ENCODE measurements at regions of chr16 and their contacts with region 1.

Region 1: DNA sequence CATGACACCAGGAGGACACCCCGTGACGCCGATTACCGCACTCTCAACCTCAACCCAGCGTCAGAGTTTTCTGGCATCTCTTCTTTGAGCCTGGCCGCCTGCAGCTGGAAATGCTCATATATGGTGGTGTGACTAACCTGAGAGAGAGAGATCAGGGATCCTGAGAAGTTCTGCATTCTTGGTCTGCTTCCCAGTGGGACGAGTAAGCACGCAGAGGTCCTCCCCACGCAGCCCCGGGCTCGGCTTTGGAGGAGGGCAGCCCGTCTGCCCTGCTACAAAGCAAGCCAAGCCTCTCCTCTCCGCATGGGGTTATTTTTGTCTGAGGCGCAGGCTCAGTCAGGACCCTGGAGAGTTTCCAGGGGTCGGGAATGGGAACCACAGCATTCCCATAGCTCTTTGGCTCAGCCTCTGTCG is 16.5 kb downstream of the CRISPLD2 start:
- DNase-seq: peak; percentile 93 to 94
- ATAC-seq: peak; percentile 79
- H3K4me3 ChIP-seq: no peak overlapping the region
- H3K27ac ChIP-seq: no peak overlapping the region
- H3K4me1 ChIP-seq: no peaks in the 10 kb centered on the region
- H3K27me3 ChIP-seq: no peaks in the 10 kb centered on the region

Region 2: DNA sequence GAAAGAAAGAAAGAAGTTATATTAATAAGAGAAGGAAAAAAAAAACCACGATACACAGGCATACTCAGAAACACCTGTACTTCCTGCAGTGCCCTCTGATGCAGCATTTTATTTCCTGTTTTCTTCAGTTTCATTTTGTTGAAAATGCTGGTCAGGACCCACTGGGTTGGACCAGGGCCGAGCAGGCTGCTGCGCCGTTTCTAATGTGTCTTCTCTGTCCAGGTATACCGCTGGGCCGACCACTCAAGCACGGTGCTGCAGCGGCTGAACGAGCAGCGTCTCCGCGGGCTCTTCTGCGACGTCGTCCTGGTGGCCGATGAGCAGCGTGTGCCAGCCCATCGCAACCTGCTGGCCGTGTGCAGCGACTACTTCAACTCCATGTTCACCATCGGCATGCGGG is 179.6 kb before region 1 on chr16:
- intact Hi-C with region 1: no loop called
- DNase-seq: no peak
- ATAC-seq: no peak
- H3K4me3 ChIP-seq: no peak overlapping the region
- H3K27ac ChIP-seq: no peak overlapping the region
- H3K4me1 ChIP-seq: no peaks in the 10 kb centered on the region
- H3K27me3 ChIP-seq: no peaks in the 10 kb centered on the region

Region 3: DNA sequence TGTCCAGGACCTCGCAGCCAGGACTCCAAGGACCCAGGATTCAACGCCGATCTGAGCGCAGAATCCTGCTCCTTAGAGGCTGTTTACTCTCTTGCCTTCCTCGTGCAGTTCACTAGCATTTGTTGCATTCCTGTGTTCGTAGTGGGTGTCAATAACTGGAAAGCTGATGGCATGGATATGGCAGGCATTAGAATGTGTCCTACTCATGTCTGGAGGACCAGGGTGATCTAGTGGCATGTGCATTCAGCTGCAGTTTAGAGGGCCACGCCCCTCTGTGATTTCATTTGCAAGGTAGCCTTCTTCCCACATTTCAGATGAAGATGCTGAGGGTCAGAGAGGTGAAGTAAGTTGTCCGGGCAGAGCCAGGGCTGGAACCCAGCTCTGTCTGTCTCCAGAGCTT is 15.9 kb before region 1 on chr16:
- intact Hi-C with region 1: no loop called
- DNase-seq: no peak
- ATAC-seq: peak; percentile 8
- H3K4me3 ChIP-seq: peak overlapping the region in 1 of 2 donors; percentile 7
- H3K27ac ChIP-seq: no peak overlapping the region
- H3K4me1 ChIP-seq: no peaks in the 10 kb centered on the region
- H3K27me3 ChIP-seq: no peaks in the 10 kb centered on the region

Region 4: GRCh38 chr16:84933774-84934631 is 97.8 kb after region 1 on chr16:
- intact Hi-C with region 1: loop called in 1 of 2 experiments (anchors 5 kb)
- DNase-seq: peak; percentile 89 to 93
- ATAC-seq: peak; percentile 92
- H3K4me3 ChIP-seq: no peak overlapping the region
- H3K27ac ChIP-seq: peak overlapping the region; percentile 31 to 72
- H3K4me1 ChIP-seq: peaks cover 0 to 1% of the 10 kb centered on the region in 2 donors
- H3K27me3 ChIP-seq: no peaks in the 10 kb centered on the region